ENCODE measurements at regions of chr10 and their contacts with region 1.

Region 1: GRCh38 chr10:132582771-132583170 is 45.2 kb downstream of the INPP5A start:
- DNase-seq: no peak
- ATAC-seq: no peak
- H3K4me3 Mint-ChIP-seq: no peak overlapping the region
- H3K27ac Mint-ChIP-seq: no peak overlapping the region
- H3K4me1 Mint-ChIP-seq: peaks cover 33% of the 10 kb centered on the region
- H3K27me3 Mint-ChIP-seq: no peaks in the 10 kb centered on the region
- CTCF ChIP-seq: no peak

Region 2: DNA sequence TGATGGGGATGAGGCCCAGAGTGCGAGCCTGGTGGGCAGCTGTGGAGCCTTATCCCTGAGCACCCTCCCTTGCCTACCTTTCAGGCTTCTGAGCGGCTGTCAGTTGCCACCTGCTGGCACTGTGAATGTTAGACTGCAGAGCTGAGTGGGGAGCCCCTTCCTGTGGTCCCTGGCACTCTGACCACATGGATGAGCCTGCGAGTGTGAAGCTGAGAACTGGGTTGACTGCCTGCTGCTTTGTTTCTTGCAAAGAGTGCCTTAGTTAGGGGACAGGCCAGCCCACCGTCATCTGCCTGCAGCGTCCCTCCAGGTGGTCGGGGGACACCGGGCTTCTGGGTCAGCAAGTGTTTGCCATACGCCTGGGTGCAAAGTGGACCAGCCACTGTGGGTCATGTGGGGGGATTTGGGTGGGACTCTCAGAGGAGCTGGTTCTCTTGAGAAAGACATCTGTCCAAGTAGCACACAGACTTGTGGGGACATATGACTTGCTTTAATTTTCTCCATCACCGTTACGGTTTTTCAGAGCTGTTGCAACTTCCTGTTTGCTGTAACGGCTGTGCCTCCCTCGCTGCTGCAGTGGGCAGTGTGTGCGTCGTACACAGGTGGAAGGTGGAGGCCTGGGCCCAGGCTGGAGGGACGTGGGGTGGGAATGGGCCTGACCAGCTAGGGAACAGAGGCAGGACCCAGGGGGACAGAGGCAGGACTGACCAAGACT is 31.5 kb before region 1 on chr10:
- CTCF ChIA-PET with region 1: no interaction called
- POLR2A ChIA-PET with region 1: no interaction called
- intact Hi-C with region 1: no loop called
- DNase-seq: peak; percentile 74
- ATAC-seq: peak; percentile 68
- H3K4me3 Mint-ChIP-seq: peak overlapping the region; percentile 68
- H3K27ac Mint-ChIP-seq: peak overlapping the region; percentile 89
- H3K4me1 Mint-ChIP-seq: peaks cover 39% of the 10 kb centered on the region
- H3K27me3 Mint-ChIP-seq: no peaks in the 10 kb centered on the region
- CTCF ChIP-seq: peak; percentile 24

Region 3: DNA sequence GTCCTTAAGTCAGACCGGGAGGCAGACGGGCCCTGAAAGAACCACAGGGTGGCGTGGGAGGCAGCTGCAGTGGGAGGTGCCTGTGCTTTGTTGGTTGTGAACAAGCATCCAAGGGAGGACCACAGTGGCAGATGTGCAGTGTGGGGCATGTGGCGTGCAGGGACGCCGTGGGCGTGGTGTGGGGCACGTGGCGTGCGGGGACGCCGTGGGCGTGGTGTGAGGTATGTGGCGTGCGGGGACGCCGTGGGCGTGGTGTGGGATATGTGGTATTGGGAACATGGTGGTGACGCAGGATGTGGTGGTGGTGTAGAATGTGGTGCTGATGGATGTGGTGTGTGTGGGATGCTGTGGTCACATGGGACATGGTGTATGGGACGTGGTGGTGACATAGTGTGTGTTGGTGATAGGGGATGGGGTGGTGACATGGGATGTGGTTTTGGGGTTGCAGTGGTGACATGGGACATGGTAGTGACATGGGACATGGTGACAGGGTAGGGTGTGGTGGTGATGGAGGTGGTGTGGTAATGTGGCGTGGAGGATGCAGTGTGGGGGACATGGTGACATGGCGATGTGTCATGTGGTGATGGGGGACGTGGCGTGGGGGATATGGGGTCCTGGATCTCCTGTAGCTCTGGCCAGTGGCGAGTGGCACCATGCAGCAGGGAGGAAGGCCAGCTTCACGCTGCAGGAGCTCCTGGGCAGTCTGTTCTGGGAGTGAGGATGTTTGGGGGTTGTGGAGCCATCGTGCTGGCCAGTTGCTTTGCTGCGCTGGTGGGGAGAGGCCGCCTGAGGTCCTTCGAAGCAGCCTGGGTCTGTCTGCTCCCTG is 33.6 kb after region 1 on chr10:
- CTCF ChIA-PET with region 1: no interaction called
- POLR2A ChIA-PET with region 1: no interaction called
- intact Hi-C with region 1: loop called (anchors 5 kb)
- DNase-seq: peak; percentile 90
- ATAC-seq: peak; percentile 86
- H3K4me3 Mint-ChIP-seq: peak overlapping the region; percentile 69
- H3K27ac Mint-ChIP-seq: peak overlapping the region; percentile 89
- H3K4me1 Mint-ChIP-seq: peaks cover 36% of the 10 kb centered on the region
- H3K27me3 Mint-ChIP-seq: peaks cover 6% of the 10 kb centered on the region
- CTCF ChIP-seq: no peak

Measured in activated CD8-positive, alpha-beta T cell treated with anti-CD3 and anti-CD28 coated beads for 36 hours (primary cell).